ENCODE measurements at regions of chr9 and their contacts with region 1.

Region 1: DNA sequence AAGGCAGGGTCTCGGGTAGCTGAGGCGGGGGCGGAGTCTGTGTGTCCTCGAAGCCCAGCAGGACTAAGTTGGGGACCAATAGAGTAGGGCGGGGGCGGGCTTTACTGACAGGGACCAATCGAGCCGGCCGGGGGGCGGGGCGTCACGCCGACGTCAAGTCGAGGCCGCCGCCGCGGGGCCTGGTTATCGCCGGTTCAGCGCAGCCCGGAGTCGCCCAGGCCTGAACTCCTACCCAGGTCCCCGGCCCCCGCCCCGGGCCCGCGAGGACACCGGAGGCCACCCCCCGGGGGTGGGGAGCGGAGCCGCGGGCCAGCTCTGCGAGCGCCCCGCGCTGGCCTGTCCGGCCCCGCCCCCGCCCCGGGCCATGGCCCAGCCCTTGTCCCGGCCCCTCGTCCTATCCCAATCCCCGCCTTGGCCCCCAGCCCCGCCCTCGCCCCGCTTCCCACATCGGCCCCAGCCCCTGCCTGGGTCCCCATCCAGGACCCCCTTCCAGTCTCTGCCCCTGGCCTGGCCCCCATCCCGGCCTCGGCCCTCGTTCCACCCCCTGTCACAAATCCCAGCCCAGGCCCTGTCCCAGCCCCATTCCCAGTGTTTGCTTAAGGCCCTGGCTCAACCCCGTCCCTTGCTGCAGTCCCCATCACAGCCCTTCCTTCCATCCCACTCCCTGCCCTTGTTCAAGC is at the start of gene TMEM8B:
- DNase-seq: peak; percentile 73
- ATAC-seq: peak; percentile 82
- H3K4me3 ChIP-seq: peak within 1 kb of the TSS; percentile 86
- H3K27ac ChIP-seq: no peak within 1 kb of the TSS
- H3K4me1 ChIP-seq: peaks cover 29% of the 10 kb centered on the region
- H3K27me3 ChIP-seq: no peaks in the 10 kb centered on the region
- CTCF ChIP-seq: no peak
- total RNA-seq, gene TMEM8B: 1.6 and 2.4 TPM in 2 replicates

Region 2: DNA sequence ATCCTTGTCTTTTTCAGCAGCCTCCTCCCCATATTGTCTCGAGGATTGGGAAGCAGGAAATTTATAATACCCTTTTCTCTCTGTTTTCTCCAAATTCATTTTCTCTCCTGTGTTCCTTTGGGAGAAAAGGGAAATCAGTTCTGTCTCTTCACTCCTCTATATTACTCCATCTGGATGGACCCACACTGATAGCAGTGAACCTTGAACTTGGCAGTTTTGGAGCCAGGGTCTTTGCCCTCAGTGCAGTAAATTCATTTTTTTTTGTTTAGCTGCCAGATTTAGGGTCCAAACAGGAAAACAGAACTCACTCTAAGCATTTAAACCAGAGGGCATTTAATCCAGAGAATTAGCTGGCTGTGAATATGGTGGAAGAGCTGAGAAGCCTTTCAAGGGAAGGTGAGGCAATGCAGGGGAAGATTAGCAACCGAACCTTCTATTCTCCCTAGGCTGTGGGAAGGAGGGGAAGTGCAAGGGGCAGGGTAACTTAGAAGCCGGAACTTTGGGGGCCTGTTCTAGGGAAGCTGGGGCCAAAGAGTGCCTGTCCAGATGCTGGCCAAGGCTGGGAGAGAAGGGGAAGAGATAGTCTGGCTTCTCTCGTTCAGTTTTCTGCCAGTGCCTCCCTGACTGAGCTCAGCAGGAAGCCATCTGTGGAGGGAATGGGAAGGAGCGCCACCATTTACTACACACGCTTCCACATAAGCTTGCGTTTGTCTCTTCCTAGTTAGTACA is 54.2 kb before region 1 on chr9:
- CTCF ChIA-PET with region 1: no interaction called
- POLR2A ChIA-PET with region 1: no interaction called
- intact Hi-C with region 1: loop called (anchors 10 kb)
- DNase-seq: no peak
- ATAC-seq: no peak
- H3K4me3 ChIP-seq: no peak overlapping the region
- H3K27ac ChIP-seq: no peak overlapping the region
- H3K4me1 ChIP-seq: peaks cover 34% of the 10 kb centered on the region
- H3K27me3 ChIP-seq: no peaks in the 10 kb centered on the region
- CTCF ChIP-seq: no peak

Region 3: DNA sequence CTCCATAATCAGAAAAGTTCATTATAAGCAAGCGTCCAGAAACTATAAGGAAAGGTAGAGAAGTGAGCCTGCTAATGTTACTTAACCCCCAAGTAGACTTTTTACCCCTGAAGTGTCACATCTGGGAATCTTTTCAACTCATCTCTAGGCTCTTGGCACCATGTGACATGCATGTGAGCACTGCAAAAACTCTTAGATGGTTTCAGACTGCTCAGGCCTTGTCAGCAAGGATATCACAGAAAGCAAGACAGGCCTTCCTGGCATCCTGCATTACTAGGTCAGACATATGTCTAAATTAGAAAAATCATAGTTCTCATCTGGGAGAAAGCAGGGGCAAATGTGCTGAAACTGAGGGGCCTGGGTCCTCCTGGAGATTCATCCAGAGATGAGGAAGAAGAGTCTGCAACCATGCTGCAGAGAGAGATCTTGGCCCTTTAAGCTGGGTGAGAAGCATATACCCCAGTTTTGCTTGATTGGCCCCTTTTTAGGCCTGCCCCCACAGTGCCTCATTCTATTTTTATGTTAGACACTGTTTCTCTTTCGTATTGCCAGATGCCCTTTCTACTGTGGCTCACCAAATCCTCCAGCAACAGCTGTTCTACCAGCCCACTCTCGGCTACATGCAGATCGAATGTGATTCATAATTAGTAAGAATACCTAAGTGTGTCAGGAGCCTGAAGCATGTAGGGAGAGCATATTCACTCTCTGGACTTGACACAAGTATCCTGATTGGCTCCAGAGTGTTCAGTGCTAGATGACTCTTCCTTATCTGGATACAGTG is 18.8 kb after region 1 on chr9:
- CTCF ChIA-PET with region 1: no interaction called
- POLR2A ChIA-PET with region 1: no interaction called
- intact Hi-C with region 1: no loop called
- DNase-seq: peak; percentile 77
- ATAC-seq: peak; percentile 76
- H3K4me3 ChIP-seq: no peak overlapping the region
- H3K27ac ChIP-seq: no peak overlapping the region
- H3K4me1 ChIP-seq: peaks cover 24% of the 10 kb centered on the region
- H3K27me3 ChIP-seq: no peaks in the 10 kb centered on the region
- CTCF ChIP-seq: no peak

Region 4: GRCh38 chr9:35882263-35882848 is 53.1 kb after region 1 on chr9:
- CTCF ChIA-PET with region 1: interaction called, 21 read pairs
- POLR2A ChIA-PET with region 1: no interaction called
- intact Hi-C with region 1: loop called (anchors 1 kb)
- DNase-seq: peak; percentile 74
- ATAC-seq: peak; percentile 73
- H3K4me3 ChIP-seq: no peak overlapping the region
- H3K27ac ChIP-seq: no peak overlapping the region
- H3K4me1 ChIP-seq: no peaks in the 10 kb centered on the region
- H3K27me3 ChIP-seq: no peaks in the 10 kb centered on the region
- CTCF ChIP-seq: peak; percentile 92